Caco-2 (cell line): ENCODE measurements at regions of chr5 and their contacts with region 1.

Region 1: DNA sequence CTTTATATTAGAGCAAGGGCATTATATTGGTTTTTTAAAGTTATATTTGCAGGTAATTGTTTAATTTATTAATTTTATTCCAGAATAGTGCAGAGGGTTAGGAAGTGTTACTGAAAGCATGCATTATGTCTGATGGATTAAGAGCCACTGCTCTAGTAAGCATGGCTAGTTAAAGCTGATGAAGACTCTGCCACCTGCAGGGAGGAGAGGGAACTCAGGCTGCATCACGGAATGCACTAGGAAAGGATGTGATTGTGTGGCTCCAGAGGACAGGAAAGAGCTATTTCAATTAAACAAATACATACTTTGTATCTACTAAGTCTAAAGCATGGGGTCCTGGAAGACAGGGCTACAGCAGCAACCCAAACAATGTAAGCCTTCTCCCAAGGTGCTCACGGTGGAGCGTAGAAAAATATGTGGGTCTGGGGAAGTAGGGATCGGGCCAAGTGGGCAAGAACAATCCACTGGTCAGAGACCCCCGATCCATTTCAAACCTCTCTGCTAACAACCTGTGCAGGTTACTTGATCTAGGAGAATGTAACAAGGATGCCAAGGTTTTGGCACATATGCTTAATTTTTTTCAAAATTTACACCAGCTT is 15.3 kb upstream of the GRXCR2 start:
- DNase-seq: peak; percentile 69 to 70
- H3K4me3 ChIP-seq: no peak overlapping the region
- H3K4me3 Mint-ChIP-seq: no peak overlapping the region
- H3K27ac Mint-ChIP-seq: no peak overlapping the region
- H3K4me1 ChIP-seq: no peaks in the 10 kb centered on the region
- H3K4me1 Mint-ChIP-seq: no peaks in the 10 kb centered on the region
- H3K27me3 ChIP-seq: no peaks in the 10 kb centered on the region
- H3K27me3 Mint-ChIP-seq: no peaks in the 10 kb centered on the region
- CTCF ChIP-seq: peak; percentile 75 to 93

Region 2: DNA sequence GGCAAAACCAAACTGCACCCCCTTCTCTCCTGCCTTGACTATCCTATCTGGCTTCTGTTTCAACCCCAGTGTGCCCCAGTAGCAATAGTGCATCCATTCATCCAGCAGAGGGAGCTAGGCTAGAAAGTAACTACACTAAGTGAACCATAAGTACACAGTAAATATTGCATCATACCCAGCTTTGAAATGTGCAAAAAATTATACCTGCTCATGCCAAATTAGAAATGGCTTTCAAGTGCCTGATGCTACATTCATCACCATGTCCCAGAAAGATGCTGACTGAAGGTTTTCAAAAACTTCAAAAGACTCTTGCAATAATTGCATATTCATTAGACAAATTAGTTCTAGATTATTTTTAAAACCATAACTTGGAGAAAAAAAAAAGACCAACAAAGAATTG is 206.4 kb before region 1 on chr5:
- CTCF ChIA-PET with region 1: interaction called, 4 read pairs
- POLR2A ChIA-PET with region 1: no interaction called
- intact Hi-C with region 1: loop called (anchors 1 kb)
- DNase-seq: peak; percentile 75 to 80
- H3K4me3 ChIP-seq: no peak overlapping the region
- H3K4me3 Mint-ChIP-seq: no peak overlapping the region
- H3K27ac Mint-ChIP-seq: no peak overlapping the region
- H3K4me1 ChIP-seq: peaks cover 24% of the 10 kb centered on the region
- H3K4me1 Mint-ChIP-seq: peaks cover 31% of the 10 kb centered on the region
- H3K27me3 ChIP-seq: no peaks in the 10 kb centered on the region
- H3K27me3 Mint-ChIP-seq: no peaks in the 10 kb centered on the region
- CTCF ChIP-seq: peak; percentile 80 to 91

Region 3: DNA sequence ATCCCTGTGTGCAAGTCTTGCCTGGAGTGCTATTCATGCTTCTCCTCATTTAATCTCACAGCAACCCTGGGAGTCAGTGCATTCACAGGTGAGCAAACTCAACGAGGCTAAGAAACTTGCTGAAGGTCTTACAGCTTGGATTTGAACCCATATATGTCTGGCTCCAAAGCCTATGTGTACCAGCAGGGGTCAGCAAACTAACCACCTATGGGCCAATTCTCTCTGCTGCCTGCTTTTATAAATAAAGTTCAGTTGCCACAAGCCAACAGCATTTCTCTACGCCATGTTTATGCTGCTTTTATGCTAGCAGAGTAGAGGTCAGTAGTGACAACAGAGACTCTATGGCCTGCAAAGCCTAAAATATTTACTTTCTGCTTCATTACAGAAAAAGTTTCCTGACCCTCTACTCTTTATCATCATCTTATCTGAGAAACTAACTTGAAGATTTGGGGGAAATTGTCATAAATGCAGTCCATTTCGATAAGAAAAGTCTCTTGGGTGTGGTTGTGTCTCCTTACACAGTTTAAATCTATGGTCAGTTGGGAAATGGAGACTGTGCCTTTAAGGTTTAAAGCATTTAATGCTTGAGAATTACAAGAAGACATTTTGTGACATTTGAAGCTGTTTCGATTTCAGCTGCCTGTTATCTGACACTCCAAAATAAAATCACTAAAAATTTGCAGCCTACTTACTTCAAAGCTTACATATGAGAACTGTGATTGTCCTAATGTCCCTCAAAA is 190.7 kb before region 1 on chr5:
- CTCF ChIA-PET with region 1: no interaction called
- POLR2A ChIA-PET with region 1: no interaction called
- intact Hi-C with region 1: loop called (anchors 5 kb)
- DNase-seq: peak in 1 of 2 experiments; percentile 40
- H3K4me3 ChIP-seq: no peak overlapping the region
- H3K4me3 Mint-ChIP-seq: no peak overlapping the region
- H3K27ac Mint-ChIP-seq: no peak overlapping the region
- H3K4me1 ChIP-seq: no peaks in the 10 kb centered on the region
- H3K4me1 Mint-ChIP-seq: no peaks in the 10 kb centered on the region
- H3K27me3 ChIP-seq: no peaks in the 10 kb centered on the region
- H3K27me3 Mint-ChIP-seq: no peaks in the 10 kb centered on the region
- CTCF ChIP-seq: peak; percentile 44 to 64

Region 4: GRCh38 chr5:145825751-145826180 is 62.3 kb before region 1 on chr5:
- CTCF ChIA-PET with region 1: interaction called, 10 read pairs
- POLR2A ChIA-PET with region 1: no interaction called
- intact Hi-C with region 1: no loop called
- DNase-seq: peak in 1 of 2 experiments; percentile 45
- H3K4me3 ChIP-seq: no peak overlapping the region
- H3K4me3 Mint-ChIP-seq: no peak overlapping the region
- H3K27ac Mint-ChIP-seq: no peak overlapping the region
- H3K4me1 ChIP-seq: no peaks in the 10 kb centered on the region
- H3K4me1 Mint-ChIP-seq: peaks cover 16% of the 10 kb centered on the region
- H3K27me3 ChIP-seq: no peaks in the 10 kb centered on the region
- H3K27me3 Mint-ChIP-seq: no peaks in the 10 kb centered on the region
- CTCF ChIP-seq: peak; percentile 77 to 94

Region 5: GRCh38 chr5:145834917-145835847 is 52.9 kb before region 1 on chr5 and contains the start of gene PRELID2:
- CTCF ChIA-PET with region 1: interaction called, 5 read pairs
- POLR2A ChIA-PET with region 1: no interaction called
- intact Hi-C with region 1: loop called (anchors 1 kb)
- DNase-seq: peak; percentile 96 to 97
- H3K4me3 ChIP-seq: peak within 1 kb of the TSS; percentile 82
- H3K4me3 Mint-ChIP-seq: peak within 1 kb of the TSS; percentile 72
- H3K27ac Mint-ChIP-seq: peak within 1 kb of the TSS; percentile 79
- H3K4me1 ChIP-seq: peaks cover 19% of the 10 kb centered on the region
- H3K4me1 Mint-ChIP-seq: peaks cover 23% of the 10 kb centered on the region
- H3K27me3 ChIP-seq: no peaks in the 10 kb centered on the region
- H3K27me3 Mint-ChIP-seq: no peaks in the 10 kb centered on the region
- CTCF ChIP-seq: peak; percentile 23 to 24
- total RNA-seq, gene PRELID2: 26.0 and 28.7 TPM in 2 replicates

Region 6: DNA sequence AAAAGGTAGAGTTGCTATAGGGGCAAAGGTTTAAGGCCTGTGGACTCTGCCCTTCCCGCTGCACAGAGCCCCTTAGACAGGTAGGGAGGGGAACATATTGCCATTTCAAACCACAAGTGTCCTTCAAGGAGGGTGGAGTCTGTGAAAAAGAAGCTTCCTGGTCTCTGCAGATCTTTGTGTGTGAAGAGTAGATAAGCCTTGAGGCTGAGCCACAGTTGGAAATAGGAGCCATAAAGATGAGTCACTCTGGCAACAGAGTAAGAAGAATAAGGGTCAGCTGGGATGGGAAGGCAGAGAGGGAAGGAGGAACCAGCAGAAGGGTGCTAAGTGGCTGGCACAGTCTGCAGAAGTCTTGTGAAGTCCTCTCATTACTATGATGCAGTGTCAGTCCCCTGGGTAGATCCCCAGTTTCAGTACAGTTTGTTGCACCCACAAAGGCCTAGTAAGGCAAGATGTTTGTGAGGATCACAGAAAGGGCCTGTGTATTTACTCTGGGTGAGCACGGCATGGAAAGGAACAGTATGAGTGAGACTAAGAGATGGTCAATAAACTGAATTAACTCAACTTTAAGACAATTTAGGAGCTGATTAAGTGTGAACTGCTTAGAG is 33.3 kb before region 1 on chr5:
- CTCF ChIA-PET with region 1: interaction called, 5 read pairs
- POLR2A ChIA-PET with region 1: no interaction called
- intact Hi-C with region 1: loop called (anchors 1 kb)
- DNase-seq: peak; percentile 69 to 86
- H3K4me3 ChIP-seq: no peak overlapping the region
- H3K4me3 Mint-ChIP-seq: peak overlapping the region; percentile 23
- H3K27ac Mint-ChIP-seq: peak overlapping the region; percentile 62
- H3K4me1 ChIP-seq: peaks cover 39% of the 10 kb centered on the region
- H3K4me1 Mint-ChIP-seq: peaks cover 36% of the 10 kb centered on the region
- H3K27me3 ChIP-seq: no peaks in the 10 kb centered on the region
- H3K27me3 Mint-ChIP-seq: no peaks in the 10 kb centered on the region
- CTCF ChIP-seq: no peak

Region 7: GRCh38 chr5:145908205-145908945 is 20.3 kb after region 1 on chr5:
- CTCF ChIA-PET with region 1: no interaction called
- POLR2A ChIA-PET with region 1: no interaction called
- intact Hi-C with region 1: no loop called
- DNase-seq: peak in 1 of 2 experiments; percentile 52
- H3K4me3 ChIP-seq: no peak overlapping the region
- H3K4me3 Mint-ChIP-seq: no peak overlapping the region
- H3K27ac Mint-ChIP-seq: peak overlapping the region; percentile 18
- H3K4me1 ChIP-seq: peaks cover 14% of the 10 kb centered on the region; the same call in 1 of the 2 replicates
- H3K4me1 Mint-ChIP-seq: peaks cover 29% of the 10 kb centered on the region
- H3K27me3 ChIP-seq: no peaks in the 10 kb centered on the region
- H3K27me3 Mint-ChIP-seq: no peaks in the 10 kb centered on the region
- CTCF ChIP-seq: peak; percentile 43 to 69